ENCODE measurements at regions of chr14 and their contacts with region 1.

Region 1: GRCh38 chr14:49862089-49862673 is 9.6 kb upstream of the NEMF start:
- DNase-seq: peak; percentile 81
- H3K4me3 Mint-ChIP-seq: no peak overlapping the region
- H3K27ac Mint-ChIP-seq: no peak overlapping the region
- H3K4me1 Mint-ChIP-seq: peaks cover 10% of the 10 kb centered on the region
- H3K27me3 Mint-ChIP-seq: peaks cover 6% of the 10 kb centered on the region

Region 2: GRCh38 chr14:49692811-49693734 is 169.1 kb before region 1 on chr14 and contains the start of gene KLHDC1:
- intact Hi-C with region 1: loop called (anchors 2 kb)
- DNase-seq: peak; percentile 74
- H3K4me3 Mint-ChIP-seq: peak within 1 kb of the TSS; percentile 87
- H3K27ac Mint-ChIP-seq: peak within 1 kb of the TSS; percentile 94
- H3K4me1 Mint-ChIP-seq: peaks cover 19% of the 10 kb centered on the region
- H3K27me3 Mint-ChIP-seq: peaks cover 1% of the 10 kb centered on the region
- total RNA-seq, gene KLHDC1: 0.93 and 1.9 TPM in 2 replicates

Measured in activated T-helper 1 cell treated with anti-CD3 and anti-CD28 coated beads, Interleukin-12 subunit alpha, Interleukin-12 subunit beta, Interleukin-2, Interleukin-4 antibody, amounts not matched to agents 30 ng/mL and 10 ng/mL and 1 ng/mL, durations not matched to agents 14 hours and 24 hours and 36 hours (primary cell).